ENCODE measurements at regions of chr15 and their contacts with region 1.

Region 1: DNA sequence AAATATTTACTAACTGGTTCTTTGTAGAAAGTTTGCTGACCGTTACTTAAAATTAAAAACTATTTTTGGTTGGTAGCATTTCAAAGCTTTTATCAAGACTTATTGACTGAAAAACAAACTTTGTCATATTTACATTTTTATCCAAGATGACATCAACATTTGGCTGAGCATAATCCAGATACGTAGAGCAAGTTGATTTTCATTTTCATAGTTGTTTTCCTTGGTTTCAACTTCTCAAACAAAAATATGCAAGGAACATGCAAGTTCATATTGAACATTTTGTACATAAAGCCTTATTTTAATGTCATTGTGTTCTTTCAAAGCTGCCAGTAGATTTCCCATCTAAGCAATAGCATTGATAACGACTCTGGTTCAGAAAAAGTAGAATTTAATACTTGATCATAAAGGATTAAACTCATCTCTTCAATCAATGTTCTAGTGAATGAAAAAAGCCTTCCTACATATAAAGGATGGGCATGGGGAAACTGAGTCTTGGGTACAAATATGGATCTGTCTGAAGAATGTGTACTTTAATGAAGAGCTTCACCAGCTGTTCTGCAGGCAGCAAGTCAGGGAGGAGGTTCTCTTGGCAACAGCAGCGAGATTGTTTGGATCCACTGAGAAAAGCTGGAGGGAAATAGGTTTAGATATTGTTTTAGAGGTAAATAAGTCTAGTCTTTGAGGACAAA is 5.6 kb downstream of the RAB8B start:
- DNase-seq: no peak
- H3K4me3 Mint-ChIP-seq: peak overlapping the region; percentile 51
- H3K27ac Mint-ChIP-seq: peak overlapping the region; percentile 50
- H3K4me1 Mint-ChIP-seq: peaks cover 88% of the 10 kb centered on the region
- H3K27me3 Mint-ChIP-seq: no peaks in the 10 kb centered on the region

Region 2: DNA sequence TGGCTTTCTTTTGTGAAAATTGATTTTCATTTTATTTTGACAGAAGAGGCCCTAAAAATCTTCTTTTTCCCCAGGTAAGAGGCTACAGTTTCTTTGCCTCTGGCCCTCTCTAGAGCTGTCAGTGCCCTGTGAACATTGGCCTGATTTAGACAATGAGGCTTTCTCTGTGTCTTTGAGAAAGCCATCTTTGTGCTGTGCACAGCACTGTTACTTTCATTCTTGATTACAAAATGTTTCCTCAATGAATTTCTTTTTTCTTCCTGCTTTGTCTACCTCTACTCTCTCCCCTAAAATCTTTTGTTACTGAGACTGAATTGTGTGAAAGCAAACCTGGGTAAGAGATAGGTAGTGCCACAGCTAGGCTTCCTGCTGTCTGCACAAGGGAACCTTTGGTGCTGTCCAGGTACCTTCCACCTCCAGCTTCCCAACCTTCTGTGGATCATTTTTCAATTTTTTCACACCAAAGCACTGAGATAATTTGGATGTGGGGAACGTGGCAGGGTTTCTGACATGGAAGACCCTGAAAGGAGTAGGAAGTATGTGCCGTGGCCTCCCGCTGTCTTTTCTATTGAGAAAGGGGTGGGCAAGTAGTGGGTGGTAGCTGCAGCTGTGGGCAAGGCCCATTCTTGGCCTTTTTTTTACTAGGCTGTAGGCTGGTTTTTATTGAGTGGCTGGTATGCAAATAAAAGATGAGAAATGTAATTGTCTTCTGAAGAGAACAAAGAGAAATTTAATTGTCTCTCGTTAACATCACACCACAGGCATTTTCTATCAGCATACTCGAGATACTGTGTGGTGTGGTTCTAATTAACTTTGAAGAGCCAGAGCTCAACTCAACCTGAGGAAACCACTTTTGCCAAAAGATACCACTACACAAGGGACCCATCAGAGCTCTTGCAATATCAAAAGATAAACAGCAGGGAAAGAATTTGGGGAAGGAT is 15.4 kb after region 1 on chr15:
- CTCF ChIA-PET with region 1: interaction called, 12 read pairs
- DNase-seq: no peak
- H3K4me3 Mint-ChIP-seq: peak overlapping the region; percentile 14
- H3K27ac Mint-ChIP-seq: peak overlapping the region; percentile 92
- H3K4me1 Mint-ChIP-seq: peaks cover 82% of the 10 kb centered on the region
- H3K27me3 Mint-ChIP-seq: no peaks in the 10 kb centered on the region

Region 3: DNA sequence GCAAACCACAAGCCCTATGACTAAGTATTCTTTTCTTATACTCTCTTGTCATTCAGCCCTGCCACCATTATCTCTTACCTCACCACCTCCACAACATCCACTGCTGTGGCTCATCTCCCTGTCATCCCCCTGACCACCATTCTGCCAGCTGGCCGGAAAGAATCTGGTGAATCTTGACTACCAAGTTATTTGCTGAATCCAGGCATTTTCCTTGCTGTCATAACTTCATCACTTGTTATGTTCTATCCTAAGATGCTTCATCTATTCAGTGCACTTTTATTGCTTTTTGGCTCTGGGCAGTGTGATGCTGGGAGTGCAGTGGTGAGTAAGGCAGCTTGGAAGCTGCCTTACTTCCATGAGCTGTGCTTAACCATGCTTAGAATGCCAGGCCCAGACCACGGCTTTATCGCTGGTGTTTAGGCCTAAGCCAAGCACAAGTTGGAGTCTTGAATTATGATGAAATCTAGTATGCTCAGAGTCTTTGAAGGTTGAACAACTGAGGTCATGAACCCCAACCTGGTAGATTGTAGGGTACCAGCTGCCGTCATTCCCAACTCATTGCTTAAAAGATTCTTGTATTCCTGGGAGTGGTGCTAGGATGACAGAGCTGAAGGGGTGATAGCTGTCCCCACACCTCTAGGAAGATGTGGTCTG is 55.4 kb after region 1 on chr15:
- CTCF ChIA-PET with region 1: no interaction called
- DNase-seq: no peak
- H3K4me3 Mint-ChIP-seq: no peak overlapping the region
- H3K27ac Mint-ChIP-seq: peak overlapping the region; percentile 8
- H3K4me1 Mint-ChIP-seq: peaks cover 12% of the 10 kb centered on the region
- H3K27me3 Mint-ChIP-seq: no peaks in the 10 kb centered on the region

Measured in activated naive CD4-positive, alpha-beta T cell treated with anti-CD3 and anti-CD28 coated beads, Interleukin-2, amount 10 ng/mL, durations not matched to agents 7 days and 5 days (primary cell).